Activated CD4-positive, alpha-beta T cell treated with anti-CD3 and anti-CD28 coated beads for 36 hours (primary cell): ENCODE measurements at regions of chr2 and their contacts with region 1.

Region 1: DNA sequence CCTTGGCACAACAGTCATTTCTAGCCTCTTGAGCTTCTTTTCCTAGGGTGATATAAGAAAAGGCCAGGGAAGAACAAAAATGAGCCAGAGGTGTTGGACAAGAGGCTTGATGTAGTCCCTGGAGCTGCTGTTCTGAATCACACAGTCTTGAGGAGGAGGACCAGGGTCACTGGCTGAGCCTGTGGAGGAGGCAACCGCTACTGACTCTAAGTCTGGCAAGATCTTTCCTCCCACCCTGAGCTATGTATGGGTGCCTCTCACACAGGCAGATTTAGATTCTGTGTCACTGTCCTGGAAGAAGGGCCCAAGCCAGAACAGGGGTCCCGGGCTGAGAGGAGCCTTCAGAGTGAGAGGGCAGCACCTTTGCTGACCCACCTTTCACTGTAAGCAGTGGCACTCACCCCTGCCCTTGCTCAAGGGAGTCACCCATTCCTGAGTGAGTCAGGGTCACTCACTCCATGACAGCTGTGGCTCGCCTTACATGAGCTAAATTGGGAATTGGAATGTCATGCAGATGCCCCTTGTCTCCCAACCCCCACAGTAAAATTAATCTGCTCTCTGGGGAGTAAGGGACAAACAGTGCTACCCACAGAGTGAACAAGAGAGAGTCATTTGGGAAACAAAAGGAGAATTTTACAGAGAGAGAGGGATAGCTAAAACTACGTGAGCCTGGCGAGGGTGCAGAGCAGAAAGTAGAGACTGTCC is at the start of gene TRIM54:
- DNase-seq: no peak
- ATAC-seq: no peak
- H3K4me3 Mint-ChIP-seq: no peak within 1 kb of the TSS
- H3K27ac Mint-ChIP-seq: no peak within 1 kb of the TSS
- H3K4me1 Mint-ChIP-seq: peaks cover 4% of the 10 kb centered on the region
- H3K27me3 Mint-ChIP-seq: peaks cover 15% of the 10 kb centered on the region
- total RNA-seq, gene TRIM54: 0.09 to 0.11 TPM

Region 2: DNA sequence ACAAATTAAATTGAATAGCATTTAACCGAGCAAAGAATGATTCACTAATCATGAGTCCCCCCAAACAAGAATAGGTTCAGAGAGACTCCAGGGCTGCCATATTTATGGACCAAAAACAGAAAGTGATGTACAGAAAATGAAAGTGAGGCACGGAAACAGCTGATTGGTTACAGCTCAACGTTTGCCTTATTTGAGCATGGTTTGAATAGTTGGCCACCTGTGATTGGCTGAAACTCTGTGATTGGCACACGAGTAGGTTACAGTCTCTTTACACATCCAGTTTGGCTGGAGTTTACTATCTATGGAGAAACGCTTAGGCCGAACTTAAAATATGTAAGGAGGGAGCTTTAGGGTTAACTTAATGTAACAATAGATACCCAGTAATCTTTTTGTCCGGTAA is 461.1 kb before region 1 on chr2:
- CTCF ChIA-PET with region 1: no interaction called
- POLR2A ChIA-PET with region 1: no interaction called
- intact Hi-C with region 1: no loop called
- DNase-seq: no peak
- ATAC-seq: no peak
- H3K4me3 Mint-ChIP-seq: no peak overlapping the region
- H3K27ac Mint-ChIP-seq: no peak overlapping the region
- H3K4me1 Mint-ChIP-seq: no peaks in the 10 kb centered on the region
- H3K27me3 Mint-ChIP-seq: peaks cover 2% of the 10 kb centered on the region

Region 3: GRCh38 chr2:27095745-27096651 is 186.0 kb before region 1 on chr2:
- CTCF ChIA-PET with region 1: interaction called, 23 read pairs
- POLR2A ChIA-PET with region 1: no interaction called
- intact Hi-C with region 1: loop called (anchors 1 kb)
- DNase-seq: peak; percentile 72
- ATAC-seq: peak; percentile 98
- H3K4me3 Mint-ChIP-seq: peak overlapping the region; percentile 35
- H3K27ac Mint-ChIP-seq: peak overlapping the region; percentile 30
- H3K4me1 Mint-ChIP-seq: peaks cover 10% of the 10 kb centered on the region
- H3K27me3 Mint-ChIP-seq: no peaks in the 10 kb centered on the region

Region 4: GRCh38 chr2:27174316-27175040 is 107.5 kb before region 1 on chr2:
- CTCF ChIA-PET with region 1: interaction called, 10 read pairs
- POLR2A ChIA-PET with region 1: no interaction called
- intact Hi-C with region 1: loop called in 1 of 2 experiments (anchors 2 kb)
- DNase-seq: no peak
- ATAC-seq: no peak
- H3K4me3 Mint-ChIP-seq: no peak overlapping the region
- H3K27ac Mint-ChIP-seq: no peak overlapping the region
- H3K4me1 Mint-ChIP-seq: no peaks in the 10 kb centered on the region
- H3K27me3 Mint-ChIP-seq: peaks cover 12% of the 10 kb centered on the region

Region 5: DNA sequence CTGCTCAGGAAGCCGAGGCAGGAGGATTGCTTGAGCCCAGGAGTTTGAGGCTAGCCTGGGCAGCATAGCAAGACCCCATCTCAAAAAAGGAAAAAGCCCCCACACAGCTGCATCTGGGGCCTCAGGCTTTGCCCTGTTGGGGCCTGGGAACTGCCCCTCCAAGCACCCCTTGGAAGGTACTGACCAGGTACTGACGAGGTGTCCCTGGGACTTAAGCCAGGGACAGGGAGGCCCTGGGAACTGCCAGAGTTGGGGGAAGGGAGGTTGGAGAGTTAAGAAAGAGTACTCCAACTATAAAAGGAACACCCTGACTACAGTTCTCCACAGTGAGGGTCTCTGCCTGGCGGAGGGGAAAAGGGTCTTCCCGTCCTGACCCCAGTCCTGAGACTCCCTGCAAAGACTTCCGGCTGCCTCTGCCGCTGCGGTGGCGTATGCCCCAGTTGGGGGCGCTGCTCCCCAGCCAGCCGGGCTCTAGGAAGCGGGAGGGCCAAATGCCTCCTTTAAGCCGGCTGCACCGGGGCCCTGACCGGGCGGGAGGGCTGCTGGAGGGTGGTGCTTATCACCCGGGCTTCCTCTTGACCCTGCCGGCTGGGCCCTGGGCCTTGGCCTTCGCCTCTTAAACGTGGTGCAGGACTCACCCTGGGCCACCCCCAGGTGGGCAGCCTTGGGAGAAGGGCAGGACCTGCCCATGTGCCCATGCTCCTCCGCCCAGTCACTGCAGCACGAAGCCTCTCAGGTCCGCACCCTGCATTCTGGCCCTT is 31.9 kb before region 1 on chr2:
- CTCF ChIA-PET with region 1: interaction called, 37 read pairs
- POLR2A ChIA-PET with region 1: interaction called, 5 read pairs
- intact Hi-C with region 1: loop called (anchors 1 kb)
- DNase-seq: peak; percentile 83
- ATAC-seq: peak; percentile 93
- H3K4me3 Mint-ChIP-seq: no peak overlapping the region
- H3K27ac Mint-ChIP-seq: no peak overlapping the region
- H3K4me1 Mint-ChIP-seq: peaks cover 2% of the 10 kb centered on the region
- H3K27me3 Mint-ChIP-seq: peaks cover 4% of the 10 kb centered on the region

Region 6: DNA sequence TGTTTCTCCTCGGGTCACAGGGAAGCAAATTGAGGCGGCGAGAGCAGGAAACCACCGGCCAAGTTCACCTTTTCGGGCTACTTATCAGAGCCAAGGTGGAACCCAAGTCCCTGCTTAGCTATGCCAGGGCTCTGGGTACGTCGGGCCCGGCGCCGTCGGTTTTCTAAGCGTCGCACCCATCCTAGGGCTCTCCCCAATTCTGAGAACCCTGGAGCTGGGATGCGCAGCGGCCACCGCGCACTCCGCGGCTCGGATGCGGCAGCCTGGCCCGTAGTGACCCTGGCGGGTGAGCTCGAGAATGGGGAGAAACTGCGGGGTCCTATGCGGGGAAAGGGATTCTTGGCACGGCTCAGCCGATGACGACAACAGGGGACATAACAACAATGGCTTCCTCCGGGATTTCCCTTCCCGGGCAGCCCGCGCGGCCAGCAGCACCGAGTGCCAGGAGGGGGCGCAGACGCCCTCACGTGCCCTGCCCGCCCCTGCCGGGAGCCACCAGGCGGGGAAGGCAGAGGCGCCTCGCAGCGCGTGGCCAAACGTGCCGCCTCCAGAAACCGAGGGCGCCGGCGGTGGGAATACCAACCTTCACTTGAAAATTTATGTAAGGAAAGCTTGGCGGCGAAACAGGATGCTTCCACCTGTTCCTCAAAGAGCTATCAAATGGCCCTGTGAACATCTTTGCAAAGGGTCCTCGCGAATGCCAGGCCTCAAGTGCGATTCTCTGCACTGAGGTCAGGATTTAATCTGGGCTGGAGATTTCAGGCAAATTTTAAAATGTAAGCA is 17.1 kb before region 1 on chr2:
- CTCF ChIA-PET with region 1: interaction called, 82 read pairs
- POLR2A ChIA-PET with region 1: no interaction called
- intact Hi-C with region 1: loop called in 1 of 2 experiments (anchors 1 kb)
- DNase-seq: peak; percentile 80
- ATAC-seq: peak; percentile 67
- H3K4me3 Mint-ChIP-seq: peak overlapping the region; percentile 53
- H3K27ac Mint-ChIP-seq: no peak overlapping the region
- H3K4me1 Mint-ChIP-seq: peaks cover 23% of the 10 kb centered on the region
- H3K27me3 Mint-ChIP-seq: peaks cover 41% of the 10 kb centered on the region

Region 7: GRCh38 chr2:27271631-27272340 is 10.2 kb before region 1 on chr2:
- CTCF ChIA-PET with region 1: interaction called, 82 read pairs
- POLR2A ChIA-PET with region 1: no interaction called
- intact Hi-C with region 1: no loop called
- DNase-seq: no peak
- ATAC-seq: no peak
- H3K4me3 Mint-ChIP-seq: no peak overlapping the region
- H3K27ac Mint-ChIP-seq: no peak overlapping the region
- H3K4me1 Mint-ChIP-seq: no peaks in the 10 kb centered on the region
- H3K27me3 Mint-ChIP-seq: peaks cover 5% of the 10 kb centered on the region

Region 8: DNA sequence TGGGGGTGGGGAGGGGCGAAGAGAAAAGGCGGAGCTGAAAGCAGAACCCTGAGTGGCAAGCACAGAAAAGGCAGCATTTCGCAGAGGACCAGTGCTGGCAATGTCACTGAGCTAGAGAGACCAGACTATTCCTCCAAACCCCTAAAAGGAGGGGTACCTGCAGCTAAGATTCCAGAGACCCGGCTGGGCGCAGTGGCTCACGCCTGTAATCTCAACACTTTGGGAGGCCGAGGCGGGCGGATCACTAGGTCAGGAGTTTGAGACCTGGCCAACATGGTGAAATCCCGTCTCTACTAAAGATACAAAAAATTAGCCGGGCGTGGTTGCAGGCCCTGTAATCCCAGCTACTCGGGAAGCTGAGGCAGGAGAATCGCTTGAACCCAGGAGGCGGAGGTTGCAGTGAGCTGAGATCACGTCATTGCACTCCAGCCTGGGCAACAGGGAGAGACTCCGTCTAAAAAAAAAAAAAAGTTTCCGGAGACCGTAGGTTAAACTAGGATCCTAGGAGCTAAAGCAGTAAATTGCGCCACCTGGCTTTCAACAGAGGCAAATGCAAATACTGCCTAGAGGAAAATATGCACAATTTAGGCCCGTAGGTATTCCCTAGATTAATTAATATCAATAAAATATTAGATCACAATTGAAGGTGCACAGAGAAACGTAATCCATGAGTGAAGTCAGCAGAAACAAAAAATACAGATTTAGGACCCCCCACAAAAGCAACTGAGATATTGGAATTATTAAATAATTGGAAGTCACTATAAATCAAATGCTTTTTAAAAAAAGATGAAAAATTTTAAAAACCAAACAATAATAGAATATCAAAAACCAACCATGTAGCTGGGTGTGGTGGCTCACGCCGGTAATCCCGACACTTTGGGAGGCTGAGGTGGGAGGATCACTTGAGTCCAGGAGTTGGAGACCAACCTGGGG is 21.4 kb after region 1 on chr2:
- CTCF ChIA-PET with region 1: interaction called, 44 read pairs
- POLR2A ChIA-PET with region 1: no interaction called
- intact Hi-C with region 1: loop called in 1 of 2 experiments (anchors 1 kb)
- DNase-seq: peak; percentile 67
- ATAC-seq: peak; percentile 78
- H3K4me3 Mint-ChIP-seq: peak overlapping the region; percentile 56
- H3K27ac Mint-ChIP-seq: peak overlapping the region; percentile 24
- H3K4me1 Mint-ChIP-seq: peaks cover 5% of the 10 kb centered on the region
- H3K27me3 Mint-ChIP-seq: peaks cover 10% of the 10 kb centered on the region

Region 9: GRCh38 chr2:27362678-27363420 is 80.8 kb after region 1 on chr2:
- CTCF ChIA-PET with region 1: no interaction called
- POLR2A ChIA-PET with region 1: no interaction called
- intact Hi-C with region 1: no loop called
- DNase-seq: no peak
- ATAC-seq: no peak
- H3K4me3 Mint-ChIP-seq: no peak overlapping the region
- H3K27ac Mint-ChIP-seq: no peak overlapping the region
- H3K4me1 Mint-ChIP-seq: peaks cover 32% of the 10 kb centered on the region
- H3K27me3 Mint-ChIP-seq: no peaks in the 10 kb centered on the region